ENCODE measurements at regions of chr2 and their contacts with region 1.

Region 1: GRCh38 chr2:36785179-36785795 is 88.8 kb downstream of the VIT start:
- DNase-seq: peak in 2 of 4 donors; percentile 64 to 70
- ATAC-seq: peak; percentile 93
- H3K4me3 ChIP-seq: no peak overlapping the region
- H3K27ac ChIP-seq: no peak overlapping the region
- H3K4me1 ChIP-seq: peaks cover 0 to 4% of the 10 kb centered on the region in 2 donors
- H3K27me3 ChIP-seq: no peaks in the 10 kb centered on the region
- CTCF ChIP-seq: peak; percentile 85 to 97

Region 2: GRCh38 chr2:36835125-36835524 is 49.8 kb after region 1 on chr2:
- intact Hi-C with region 1: no loop called
- DNase-seq: no peak
- ATAC-seq: no peak
- H3K4me3 ChIP-seq: no peak overlapping the region
- H3K27ac ChIP-seq: no peak overlapping the region
- H3K4me1 ChIP-seq: no peaks in the 10 kb centered on the region
- H3K27me3 ChIP-seq: no peaks in the 10 kb centered on the region
- CTCF ChIP-seq: no peak

Region 3: DNA sequence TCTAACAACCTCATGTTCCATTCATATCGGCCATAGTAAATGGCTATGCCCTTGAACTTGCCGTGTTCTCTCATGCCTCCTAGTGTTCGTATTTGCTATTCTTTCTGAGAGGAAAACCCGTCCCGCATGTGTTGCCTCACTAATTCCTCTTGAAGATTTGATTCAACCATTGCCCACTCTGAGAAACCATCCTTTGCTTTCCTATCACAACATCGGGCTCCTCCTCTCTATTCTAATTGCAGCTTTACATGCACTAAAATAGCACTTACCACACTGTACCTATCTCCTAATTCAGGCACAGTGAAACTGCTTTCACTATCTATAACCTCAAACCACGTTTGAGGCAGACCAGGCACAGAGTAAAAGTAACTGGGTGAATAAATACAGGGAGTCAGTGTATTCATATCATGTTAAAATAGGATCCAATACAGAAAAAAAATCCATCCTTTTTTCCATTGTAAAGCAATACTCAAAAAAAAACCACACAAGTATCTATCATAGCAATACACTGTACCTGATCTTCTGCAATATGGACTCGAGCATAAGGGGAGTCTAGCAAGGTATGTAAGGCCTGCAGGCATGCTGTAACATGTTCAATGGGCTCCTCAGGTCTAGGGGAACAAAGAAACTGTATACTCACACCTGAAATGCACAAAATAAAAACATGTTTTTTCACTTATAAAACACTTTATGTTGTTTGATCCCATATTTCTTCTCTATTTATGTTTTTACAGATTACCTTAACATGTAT is 220.0 kb after region 1 on chr2:
- intact Hi-C with region 1: loop called in 1 of 2 experiments (anchors 10 kb)
- DNase-seq: peak in 2 of 4 donors; percentile 6 to 16
- ATAC-seq: peak; percentile 71
- H3K4me3 ChIP-seq: no peak overlapping the region
- H3K27ac ChIP-seq: no peak overlapping the region
- H3K4me1 ChIP-seq: no peaks in the 10 kb centered on the region
- H3K27me3 ChIP-seq: no peaks in the 10 kb centered on the region
- CTCF ChIP-seq: peak; percentile 20 to 23

Measured in left lung (tissue), 14 donors.